ENCODE measurements at regions of chr3 and their contacts with region 1.

Region 1: DNA sequence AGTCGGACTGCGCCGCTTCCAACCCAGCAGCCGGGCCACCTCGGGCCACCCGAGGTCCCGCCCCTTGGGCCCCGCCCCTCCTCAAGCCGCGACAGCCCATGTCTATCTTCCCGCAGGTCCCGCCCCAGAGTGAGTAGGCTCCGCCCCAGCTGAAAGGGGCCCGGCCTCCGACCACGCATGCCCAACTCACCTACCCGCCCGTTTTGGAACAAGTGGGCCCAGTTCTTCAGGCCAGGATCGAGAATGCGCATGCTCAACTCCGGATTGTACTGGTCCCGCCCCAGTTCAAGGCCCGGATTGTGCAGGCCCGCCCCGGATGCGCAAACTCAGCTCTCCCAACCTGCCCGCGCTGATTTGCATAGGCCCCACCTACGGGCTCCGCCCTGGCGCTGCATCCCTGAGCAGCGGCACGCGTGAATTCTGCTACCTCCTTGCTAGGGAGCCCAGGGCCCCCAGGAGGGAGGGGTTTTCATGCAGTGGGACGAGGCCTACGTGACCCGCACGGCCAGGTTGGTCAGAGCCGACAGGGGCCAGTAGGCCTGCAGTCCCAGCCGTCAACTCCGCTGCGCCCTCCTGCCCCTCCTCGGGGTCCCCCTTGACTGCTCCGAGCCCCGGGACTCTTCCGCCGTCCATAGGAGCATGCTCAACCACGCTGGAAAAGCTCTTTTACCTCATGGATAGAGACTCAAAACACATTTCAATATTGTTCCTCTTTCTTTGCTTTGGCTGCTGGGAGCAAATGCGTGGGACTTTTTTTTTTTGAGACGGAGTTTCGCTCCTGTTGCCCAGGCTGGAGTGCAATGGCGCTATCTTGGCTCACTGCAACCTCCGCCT is at the start of gene PFKFB4:
- DNase-seq: peak; percentile 99
- H3K4me3 Mint-ChIP-seq: peak within 1 kb of the TSS; percentile 74
- H3K27ac Mint-ChIP-seq: peak within 1 kb of the TSS; percentile 47
- H3K4me1 Mint-ChIP-seq: peaks cover 11% of the 10 kb centered on the region
- H3K27me3 Mint-ChIP-seq: no peaks in the 10 kb centered on the region
- CTCF ChIP-seq: no peak
- total RNA-seq, gene PFKFB4: 3.4 and 4.6 TPM in 2 replicates

Region 2: GRCh38 chr3:48157950-48158376 is 399.0 kb before region 1 on chr3:
- CTCF ChIA-PET with region 1: no interaction called
- POLR2A ChIA-PET with region 1: no interaction called
- intact Hi-C with region 1: no loop called
- DNase-seq: peak; percentile 35
- H3K4me3 Mint-ChIP-seq: no peak overlapping the region
- H3K27ac Mint-ChIP-seq: no peak overlapping the region
- H3K4me1 Mint-ChIP-seq: peaks cover 17% of the 10 kb centered on the region
- H3K27me3 Mint-ChIP-seq: no peaks in the 10 kb centered on the region
- CTCF ChIP-seq: peak; percentile 59

Region 3: DNA sequence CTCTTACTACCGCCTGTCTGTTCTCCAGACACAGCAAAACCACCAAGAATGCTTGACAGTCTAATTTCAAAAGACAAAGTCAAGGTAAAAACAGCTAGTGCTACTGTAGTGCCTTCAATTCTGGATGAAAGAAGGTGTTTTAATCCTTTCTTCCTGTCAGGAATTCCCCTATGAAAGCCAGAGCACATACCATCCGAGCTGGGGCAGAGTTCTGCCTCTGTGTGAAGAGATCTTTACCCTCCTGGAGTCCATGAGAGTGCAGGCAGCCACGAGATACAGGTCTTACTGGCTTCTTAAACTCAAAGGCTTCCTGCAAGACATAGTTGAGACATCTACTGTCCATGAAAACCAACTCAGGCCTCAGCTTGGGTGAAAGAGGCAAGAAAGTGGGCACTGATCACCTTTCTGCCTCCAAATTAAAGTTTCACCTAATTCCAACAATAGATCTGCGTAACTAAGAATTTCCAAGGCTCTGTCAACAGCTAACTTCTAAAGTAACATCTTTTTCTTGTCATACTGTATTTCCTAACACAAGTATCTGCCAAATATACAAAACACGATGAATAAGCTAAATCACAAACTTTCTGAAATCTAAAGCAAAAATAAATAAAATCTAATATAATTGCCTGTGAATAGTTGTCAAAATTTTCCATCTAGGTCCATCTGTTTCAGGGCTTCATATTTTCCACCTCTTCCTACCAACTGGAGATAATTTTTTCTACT is 376.3 kb before region 1 on chr3:
- CTCF ChIA-PET with region 1: no interaction called
- POLR2A ChIA-PET with region 1: no interaction called
- intact Hi-C with region 1: no loop called
- DNase-seq: no peak
- H3K4me3 Mint-ChIP-seq: no peak overlapping the region
- H3K27ac Mint-ChIP-seq: peak overlapping the region; percentile 35
- H3K4me1 Mint-ChIP-seq: no peaks in the 10 kb centered on the region
- H3K27me3 Mint-ChIP-seq: no peaks in the 10 kb centered on the region
- CTCF ChIP-seq: no peak

Region 4: DNA sequence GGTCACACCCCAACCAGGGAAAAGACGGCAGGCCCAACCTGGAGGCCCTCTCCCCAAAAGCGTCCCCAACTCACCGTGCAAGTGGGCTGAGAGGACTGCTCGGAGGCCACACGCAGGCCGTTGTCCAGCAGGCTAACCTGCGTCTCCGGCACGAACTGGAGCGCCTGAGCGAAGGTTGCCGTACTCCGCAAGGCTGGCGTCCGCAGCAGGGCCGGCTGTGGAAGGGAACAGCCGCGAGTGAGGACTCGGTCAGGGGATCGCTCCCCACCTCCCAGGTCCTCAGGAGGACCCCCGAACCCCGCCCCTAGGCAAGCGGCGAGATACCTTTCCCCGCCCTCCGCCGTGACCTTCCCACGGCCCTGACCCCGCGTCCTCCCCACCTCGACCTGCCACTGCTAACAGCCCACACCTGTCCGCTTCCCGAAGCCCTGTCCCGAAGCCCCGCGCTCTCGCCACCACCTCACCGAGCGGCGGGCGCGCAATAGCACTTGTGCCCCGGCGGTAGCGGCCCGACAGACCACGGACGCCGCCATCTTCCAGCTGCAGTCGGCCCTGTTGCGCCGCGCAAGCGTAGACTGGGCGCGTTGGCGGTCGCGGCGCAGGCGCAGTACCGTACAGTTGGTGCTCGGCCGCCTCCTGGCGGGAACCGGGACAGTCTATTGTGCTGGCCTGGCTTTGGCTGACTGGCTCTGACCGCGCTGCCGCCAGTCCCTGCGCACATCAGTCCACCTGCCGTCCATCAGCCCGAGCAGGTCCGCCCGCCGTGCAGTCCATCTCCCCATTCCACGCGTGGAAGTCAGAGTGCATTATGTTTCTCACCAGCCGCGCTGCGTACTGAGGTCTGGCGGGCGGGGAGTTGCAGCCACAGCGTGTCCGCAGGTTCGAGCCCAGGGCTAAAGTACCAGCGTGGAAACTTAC is 52.3 kb after region 1 on chr3 and contains the start of gene UQCRC1:
- CTCF ChIA-PET with region 1: interaction called, 3 read pairs
- POLR2A ChIA-PET with region 1: interaction called, 4 read pairs
- intact Hi-C with region 1: loop called (anchors 1 kb)
- DNase-seq: peak; percentile 91
- H3K4me3 Mint-ChIP-seq: peak within 1 kb of the TSS; percentile 94
- H3K27ac Mint-ChIP-seq: peak within 1 kb of the TSS; percentile 94
- H3K4me1 Mint-ChIP-seq: peaks cover 18% of the 10 kb centered on the region
- H3K27me3 Mint-ChIP-seq: no peaks in the 10 kb centered on the region
- CTCF ChIP-seq: peak; percentile 47
- total RNA-seq, gene UQCRC1: 383 and 413 TPM in 2 replicates